ENCODE measurements at regions of chr7 and their contacts with region 1.

Region 1: GRCh38 chr7:127585044-127585953 is at the start of gene GCC1:
- DNase-seq: peak; percentile 92
- H3K4me3 Mint-ChIP-seq: peak within 1 kb of the TSS; percentile 95
- H3K27ac Mint-ChIP-seq: peak within 1 kb of the TSS; percentile 89
- H3K4me1 Mint-ChIP-seq: peaks cover 59% of the 10 kb centered on the region
- H3K27me3 Mint-ChIP-seq: peaks cover 3% of the 10 kb centered on the region
- total RNA-seq, gene GCC1: 16.8 and 17.4 TPM in 2 replicates

Region 2: DNA sequence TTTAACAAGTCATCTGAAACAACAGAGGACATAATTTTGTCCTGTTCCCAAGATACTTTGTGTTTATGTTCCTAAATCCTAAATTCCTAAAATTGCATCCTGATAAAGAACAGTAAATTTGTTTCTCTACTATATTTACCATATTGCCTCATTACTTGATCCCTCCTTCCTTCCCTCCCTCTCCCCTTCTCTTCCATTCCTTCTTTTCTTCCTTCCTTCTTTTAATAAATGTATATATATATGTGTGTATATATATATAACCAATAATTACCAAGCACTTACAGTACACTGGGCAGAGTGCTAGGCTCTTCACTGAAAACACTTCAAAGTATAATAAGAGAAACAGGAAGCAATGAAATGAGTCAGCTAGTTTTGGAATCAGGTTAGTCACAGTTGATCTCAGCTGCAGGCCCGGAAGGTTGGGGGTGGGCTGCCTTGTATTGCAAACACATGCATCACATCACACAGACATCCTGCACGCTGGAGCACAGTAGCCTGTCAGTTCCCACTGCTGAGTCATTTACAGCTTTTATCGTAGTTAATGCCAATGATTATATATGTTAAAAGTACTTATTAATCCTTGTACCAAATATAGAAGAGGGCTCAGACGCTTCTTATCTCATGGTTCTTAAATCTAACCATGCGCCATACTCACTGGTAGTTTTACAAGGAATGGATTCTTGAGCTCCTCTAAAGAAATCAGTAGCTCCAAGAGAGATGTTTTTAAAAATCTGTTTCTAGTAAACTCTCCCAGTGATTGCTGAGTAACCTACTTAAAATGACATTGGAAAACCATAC is 884.3 kb before region 1 on chr7:
- intact Hi-C with region 1: loop called (anchors 10 kb)
- DNase-seq: peak; percentile 71
- H3K4me3 Mint-ChIP-seq: no peak overlapping the region
- H3K27ac Mint-ChIP-seq: no peak overlapping the region
- H3K4me1 Mint-ChIP-seq: peaks cover 13% of the 10 kb centered on the region
- H3K27me3 Mint-ChIP-seq: peaks cover 24% of the 10 kb centered on the region

Region 3: GRCh38 chr7:128031901-128032604 is 446.8 kb after region 1 on chr7:
- intact Hi-C with region 1: loop called (anchors 10 kb)
- DNase-seq: peak; percentile 20
- H3K4me3 Mint-ChIP-seq: peak overlapping the region; percentile 83
- H3K27ac Mint-ChIP-seq: no peak overlapping the region
- H3K4me1 Mint-ChIP-seq: no peaks in the 10 kb centered on the region
- H3K27me3 Mint-ChIP-seq: peaks cover 23% of the 10 kb centered on the region

Region 4: GRCh38 chr7:128135515-128136214 is 550.4 kb after region 1 on chr7:
- intact Hi-C with region 1: loop called (anchors 5 kb)
- DNase-seq: peak; percentile 53
- H3K4me3 Mint-ChIP-seq: peak overlapping the region; percentile 77
- H3K27ac Mint-ChIP-seq: no peak overlapping the region
- H3K4me1 Mint-ChIP-seq: peaks cover 14% of the 10 kb centered on the region
- H3K27me3 Mint-ChIP-seq: peaks cover 60% of the 10 kb centered on the region

Region 5: DNA sequence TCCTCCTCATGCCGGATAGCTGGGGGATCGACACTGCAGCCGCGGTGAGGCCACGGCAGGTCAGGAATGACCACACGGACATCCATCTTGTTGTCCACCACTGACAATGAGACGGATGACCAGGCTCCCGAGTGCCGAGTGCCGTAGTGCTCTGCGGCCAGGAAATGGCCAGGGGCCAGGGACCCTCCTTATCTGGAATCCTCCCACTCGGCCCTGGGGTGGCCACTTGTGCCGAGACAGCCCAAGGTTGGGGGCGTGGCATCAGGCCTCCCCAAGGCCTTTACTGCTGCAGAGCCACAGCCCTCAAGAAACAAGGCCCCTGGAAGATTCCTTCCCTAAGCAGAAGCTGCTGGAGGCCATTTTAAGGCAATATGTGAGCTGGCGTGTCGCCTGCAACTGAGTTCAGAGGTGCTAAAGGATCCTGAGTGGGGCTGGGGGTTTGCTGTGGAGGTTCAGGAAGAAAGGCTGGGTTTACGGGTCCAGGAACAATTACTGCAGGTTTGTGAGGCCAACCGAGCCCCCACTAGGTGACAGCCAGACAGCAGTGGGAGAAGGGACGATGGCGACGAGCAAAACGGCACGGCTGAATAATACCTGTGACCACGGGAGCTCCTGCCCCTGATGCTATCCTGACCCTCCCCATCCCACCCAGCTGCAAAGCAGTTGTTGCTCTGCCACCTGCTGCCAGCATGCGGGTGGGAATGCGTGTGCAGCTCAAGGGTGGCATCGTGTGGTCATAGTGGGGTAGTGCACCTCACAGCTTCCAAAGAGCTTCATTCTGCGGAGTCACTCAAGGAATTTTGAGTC is 624.1 kb after region 1 on chr7:
- intact Hi-C with region 1: loop called (anchors 5 kb)
- DNase-seq: peak; percentile 49
- H3K4me3 Mint-ChIP-seq: no peak overlapping the region
- H3K27ac Mint-ChIP-seq: no peak overlapping the region
- H3K4me1 Mint-ChIP-seq: no peaks in the 10 kb centered on the region
- H3K27me3 Mint-ChIP-seq: peaks cover 20% of the 10 kb centered on the region

Region 6: DNA sequence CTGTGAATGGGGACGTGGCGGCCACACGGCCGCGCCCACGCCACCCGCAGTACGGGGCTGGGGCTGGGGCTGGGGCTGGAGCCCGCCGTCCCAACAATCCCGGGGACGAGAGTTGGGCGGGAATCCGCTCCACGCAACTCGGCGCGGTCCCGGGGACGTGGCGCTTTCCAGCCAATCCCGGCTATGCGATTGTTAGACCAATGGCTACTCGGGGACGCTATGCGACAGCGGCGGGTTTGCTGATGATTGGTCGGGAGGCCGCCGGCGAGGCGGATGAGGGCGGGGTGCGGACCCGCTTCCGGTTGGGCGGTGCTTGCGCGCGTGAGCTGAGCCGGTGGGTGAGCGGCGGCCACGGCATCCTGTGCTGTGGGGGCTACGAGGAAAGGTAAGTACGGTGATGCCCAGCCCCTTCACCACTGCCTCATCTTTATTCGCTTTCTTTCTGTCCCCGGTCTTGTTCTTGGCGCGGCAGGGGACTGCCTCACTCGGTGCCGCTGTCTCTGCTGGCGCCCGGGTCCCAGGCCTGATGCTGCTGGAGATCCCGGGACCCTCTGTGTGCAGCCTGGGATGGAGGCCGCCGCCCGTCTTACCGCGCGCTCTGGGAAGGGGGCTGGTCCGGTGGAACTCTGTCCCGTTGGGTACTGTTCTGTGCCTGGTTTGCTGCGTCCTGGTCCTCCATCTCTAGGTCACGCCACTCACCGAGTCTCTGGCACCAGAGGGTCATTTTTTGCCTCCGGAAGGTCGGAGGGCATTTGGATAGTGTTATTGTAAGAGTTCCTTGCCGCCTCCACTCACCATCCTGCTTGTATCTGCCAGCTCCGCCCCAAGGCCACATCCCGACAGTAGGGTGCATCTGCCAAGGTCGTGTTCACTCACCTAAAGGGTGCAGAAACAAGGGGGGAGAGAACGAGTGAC is 1154.0 kb after region 1 on chr7 and contains the start of gene CALU:
- intact Hi-C with region 1: loop called (anchors 5 kb)
- DNase-seq: peak; percentile 95
- H3K4me3 Mint-ChIP-seq: peak within 1 kb of the TSS; percentile 100
- H3K27ac Mint-ChIP-seq: peak within 1 kb of the TSS; percentile 99
- H3K4me1 Mint-ChIP-seq: peaks cover 26% of the 10 kb centered on the region
- H3K27me3 Mint-ChIP-seq: no peaks in the 10 kb centered on the region
- total RNA-seq, gene CALU: 52.8 and 59.2 TPM in 2 replicates

Measured in activated T-helper 1 cell treated with anti-CD3 and anti-CD28 coated beads, Interleukin-12 subunit alpha, Interleukin-12 subunit beta, Interleukin-2, Interleukin-4 antibody, amounts not matched to agents 30 ng/mL and 10 ng/mL and 1 ng/mL, durations not matched to agents 14 hours and 24 hours and 36 hours (primary cell).